ENCODE measurements at regions of chr19 and their contacts with region 1.

Region 1: DNA sequence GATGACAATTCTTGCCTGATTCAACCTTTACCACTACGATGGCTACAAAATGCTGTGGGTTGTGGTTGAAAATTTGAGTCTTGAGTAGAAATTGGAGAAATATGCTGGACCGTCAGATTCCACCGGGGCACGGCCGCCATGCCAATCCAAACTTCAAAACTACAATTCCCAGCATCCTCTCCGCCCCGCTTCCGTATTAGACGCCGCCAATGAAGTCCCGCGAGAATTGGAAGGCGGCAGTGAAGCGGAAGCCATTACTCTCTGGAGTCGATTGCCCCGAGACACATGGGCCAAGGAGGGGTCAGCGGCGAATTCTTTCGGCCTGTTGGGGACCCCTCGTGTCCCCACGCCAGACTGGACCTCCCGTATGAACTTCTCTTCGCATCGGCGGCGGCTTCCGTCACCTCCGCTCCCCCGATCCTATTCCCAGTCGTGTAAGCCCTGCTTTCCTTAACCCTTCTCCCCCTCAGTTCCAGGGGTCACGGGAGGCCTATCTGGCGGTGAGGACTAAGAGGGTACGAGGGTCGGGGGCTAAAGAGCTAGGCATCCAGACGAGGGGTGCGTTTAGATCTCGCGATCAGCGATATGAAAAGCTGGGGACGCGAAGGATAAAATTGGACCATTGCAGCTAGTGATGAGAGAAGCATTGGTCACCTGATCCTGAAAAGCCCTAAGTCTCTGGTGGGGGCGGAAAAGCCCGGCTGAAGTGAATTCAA is at the start of gene ZNF317:
- DNase-seq: peak; percentile 93 to 98
- H3K4me3 ChIP-seq: peak within 1 kb of the TSS; percentile 98
- CTCF ChIP-seq: no peak
- POLR2A ChIP-seq: peak in 1 of 2 donors; percentile 12
- total RNA-seq, gene ZNF317: 19.4 to 32.4 (median 29.3) TPM

Region 2: GRCh38 chr19:10670182-10670581 is 1529.9 kb after region 1 on chr19:
- intact Hi-C with region 1: loop called (anchors 10 kb)
- DNase-seq: no peak
- H3K4me3 ChIP-seq: no peak overlapping the region
- CTCF ChIP-seq: no peak
- POLR2A ChIP-seq: no peak